ENCODE measurements at regions of chr6 and their contacts with region 1.

Region 1: GRCh38 chr6:116531675-116532570 is 13.6 kb downstream of the TRAPPC3L start:
- DNase-seq: peak in 4 of 5 donors; percentile 33 to 56 (median 54)
- ATAC-seq: peak in 3 of 4 donors; percentile 89 to 90 (median 90)
- H3K4me3 ChIP-seq: no peak overlapping the region
- H3K27ac ChIP-seq: no peak overlapping the region
- H3K4me1 ChIP-seq: peaks cover 0 to 16% (median 5%) of the 10 kb centered on the region in 12 donors
- H3K27me3 ChIP-seq: no peaks in the 10 kb centered on the region
- CTCF ChIP-seq: peak; percentile 70 to 88 (median 81)
- POLR2A ChIP-seq: no peak

Region 2: GRCh38 chr6:116287689-116288282 is 244.1 kb before region 1 on chr6:
- intact Hi-C with region 1: loop called in 9 of 10 experiments (anchors 2 to 5 kb)
- DNase-seq: no peak
- ATAC-seq: peak in 3 of 4 donors; percentile 62 to 66 (median 63)
- H3K4me3 ChIP-seq: no peak overlapping the region
- H3K27ac ChIP-seq: no peak overlapping the region
- H3K4me1 ChIP-seq: peaks cover 0 to 7% (median 2%) of the 10 kb centered on the region in 12 donors
- H3K27me3 ChIP-seq: no peaks in the 10 kb centered on the region
- CTCF ChIP-seq: peak; percentile 75 to 96 (median 88)
- POLR2A ChIP-seq: no peak

Region 3: GRCh38 chr6:116511404-116512110 is 20.4 kb before region 1 on chr6 and contains the start of gene CALHM5:
- intact Hi-C with region 1: loop called in 2 of 10 experiments (anchors 2 kb)
- DNase-seq: peak; percentile 42 to 69 (median 54)
- ATAC-seq: peak; percentile 81 to 96 (median 94)
- H3K4me3 ChIP-seq: peak within 1 kb of the TSS; percentile 15 to 65 (median 50)
- H3K27ac ChIP-seq: peak within 1 kb of the TSS; percentile 46 to 92 (median 84)
- H3K4me1 ChIP-seq: peaks cover 0 to 32% (median 11%) of the 10 kb centered on the region in 12 donors
- H3K27me3 ChIP-seq: no peaks in the 10 kb centered on the region
- CTCF ChIP-seq: peak; percentile 54 to 82 (median 68)
- POLR2A ChIP-seq: no peak
- total RNA-seq, gene CALHM5: 1.4 to 3.0 (median 1.8) TPM

Region 4: DNA sequence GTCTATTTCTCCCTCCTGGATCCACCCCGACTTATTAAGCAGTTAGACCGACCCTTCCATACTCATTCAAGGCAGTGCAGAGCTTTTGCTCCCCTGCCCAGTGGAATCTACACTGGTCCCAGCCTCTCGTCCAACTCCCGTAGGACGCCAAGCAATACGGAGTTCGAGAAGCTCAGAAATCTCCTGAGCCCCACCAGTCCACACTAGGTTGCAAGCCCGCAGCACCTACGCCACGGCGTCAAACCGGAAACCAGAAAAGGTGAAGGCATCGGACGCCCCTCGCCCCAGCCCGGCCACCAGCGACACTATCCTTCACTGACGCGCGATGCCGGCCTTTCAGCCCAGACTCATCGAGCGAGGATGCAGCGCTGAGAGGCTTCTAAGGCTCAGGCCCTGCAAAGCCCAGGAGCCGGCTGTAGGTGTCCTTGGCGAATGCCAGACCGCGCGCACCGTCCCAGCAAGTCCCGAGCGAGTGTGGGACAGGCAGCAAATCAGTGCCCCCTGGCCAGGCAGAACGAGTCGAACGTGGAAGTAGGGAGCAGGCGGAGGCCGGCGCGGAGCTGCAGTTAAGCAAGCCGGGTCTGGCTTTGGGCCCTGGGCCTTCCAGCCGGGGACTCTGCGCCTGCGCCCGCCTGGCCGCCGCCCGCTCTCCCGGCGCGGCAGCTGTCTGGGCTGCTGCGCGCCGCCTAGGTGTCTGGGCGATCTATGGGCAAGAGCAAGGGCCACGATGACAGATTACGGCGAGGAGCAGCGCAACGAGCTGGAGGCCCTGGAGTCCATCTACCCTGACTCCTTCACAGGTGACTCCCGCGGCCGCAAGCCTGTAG is 39.1 kb after region 1 on chr6 and contains the start of gene RWDD1:
- intact Hi-C with region 1: loop called in 1 of 10 experiments (anchors 5 kb)
- DNase-seq: peak; percentile 99 to 100 (median 100)
- ATAC-seq: peak; percentile 97 to 99 (median 99)
- H3K4me3 ChIP-seq: peak within 1 kb of the TSS; percentile 65 to 97 (median 80)
- H3K27ac ChIP-seq: peak within 1 kb of the TSS; percentile 73 to 96 (median 90)
- H3K4me1 ChIP-seq: peaks cover 3 to 43% (median 29%) of the 10 kb centered on the region in 12 donors
- H3K27me3 ChIP-seq: no peaks in the 10 kb centered on the region
- CTCF ChIP-seq: peak in 1 of 12 donors; percentile 25
- POLR2A ChIP-seq: peak; percentile 15 to 84
- total RNA-seq, gene RWDD1: 35.9 to 70.5 (median 48.8) TPM

Measured in heart left ventricle (tissue), 16 donors.